ENCODE measurements at regions of chr4 and their contacts with region 1.

Region 1: DNA sequence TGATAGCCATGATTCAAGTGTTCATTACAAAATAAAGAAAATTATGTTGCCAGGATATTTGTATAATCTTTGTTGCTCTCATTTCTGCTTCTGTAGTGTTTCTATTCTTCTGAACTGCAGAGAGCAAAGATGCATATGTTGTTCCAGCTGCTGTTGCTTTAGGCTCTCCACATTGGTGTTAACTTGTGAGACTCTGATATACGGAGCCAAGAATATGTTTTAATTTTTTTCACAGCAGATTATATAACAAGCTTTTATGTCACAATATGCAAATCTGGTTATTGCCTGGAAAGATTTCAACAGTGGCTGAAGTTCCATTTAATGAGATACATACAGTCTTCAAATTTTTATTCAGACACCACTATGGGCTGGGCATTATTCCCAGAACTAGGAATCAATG is 655.0 kb downstream of the GRXCR1 start:
- DNase-seq: no peak
- ATAC-seq: no peak
- H3K4me3 ChIP-seq: no peak overlapping the region
- H3K27ac ChIP-seq: no peak overlapping the region
- H3K4me1 ChIP-seq: no peaks in the 10 kb centered on the region
- H3K27me3 ChIP-seq: no peaks in the 10 kb centered on the region
- CTCF ChIP-seq: no peak
- POLR2A ChIP-seq: no peak

Region 2: GRCh38 chr4:43425206-43425605 is 122.4 kb before region 1 on chr4:
- in situ Hi-C with region 1: loop called in 1 of 4 experiments (anchors 25 kb)
- intact Hi-C with region 1: no loop called
- DNase-seq: no peak
- ATAC-seq: no peak
- H3K4me3 ChIP-seq: no peak overlapping the region
- H3K27ac ChIP-seq: no peak overlapping the region
- H3K4me1 ChIP-seq: no peaks in the 10 kb centered on the region
- H3K27me3 ChIP-seq: no peaks in the 10 kb centered on the region
- CTCF ChIP-seq: no peak
- POLR2A ChIP-seq: no peak

Region 3: GRCh38 chr4:43471950-43472349 is 75.6 kb before region 1 on chr4:
- in situ Hi-C with region 1: no loop called
- intact Hi-C with region 1: no loop called
- DNase-seq: no peak
- ATAC-seq: no peak
- H3K4me3 ChIP-seq: no peak overlapping the region
- H3K27ac ChIP-seq: no peak overlapping the region
- H3K4me1 ChIP-seq: no peaks in the 10 kb centered on the region
- H3K27me3 ChIP-seq: no peaks in the 10 kb centered on the region
- CTCF ChIP-seq: no peak
- POLR2A ChIP-seq: no peak

Region 4: GRCh38 chr4:43782391-43782790 is 234.8 kb after region 1 on chr4:
- in situ Hi-C with region 1: no loop called
- intact Hi-C with region 1: no loop called
- DNase-seq: no peak
- ATAC-seq: no peak
- H3K4me3 ChIP-seq: no peak overlapping the region
- H3K27ac ChIP-seq: no peak overlapping the region
- H3K4me1 ChIP-seq: no peaks in the 10 kb centered on the region
- H3K27me3 ChIP-seq: no peaks in the 10 kb centered on the region
- CTCF ChIP-seq: no peak
- POLR2A ChIP-seq: no peak

Measured in gastrocnemius medialis (tissue), 4 donors.